ENCODE measurements at regions of chr14 and their contacts with region 1.

Region 1: DNA sequence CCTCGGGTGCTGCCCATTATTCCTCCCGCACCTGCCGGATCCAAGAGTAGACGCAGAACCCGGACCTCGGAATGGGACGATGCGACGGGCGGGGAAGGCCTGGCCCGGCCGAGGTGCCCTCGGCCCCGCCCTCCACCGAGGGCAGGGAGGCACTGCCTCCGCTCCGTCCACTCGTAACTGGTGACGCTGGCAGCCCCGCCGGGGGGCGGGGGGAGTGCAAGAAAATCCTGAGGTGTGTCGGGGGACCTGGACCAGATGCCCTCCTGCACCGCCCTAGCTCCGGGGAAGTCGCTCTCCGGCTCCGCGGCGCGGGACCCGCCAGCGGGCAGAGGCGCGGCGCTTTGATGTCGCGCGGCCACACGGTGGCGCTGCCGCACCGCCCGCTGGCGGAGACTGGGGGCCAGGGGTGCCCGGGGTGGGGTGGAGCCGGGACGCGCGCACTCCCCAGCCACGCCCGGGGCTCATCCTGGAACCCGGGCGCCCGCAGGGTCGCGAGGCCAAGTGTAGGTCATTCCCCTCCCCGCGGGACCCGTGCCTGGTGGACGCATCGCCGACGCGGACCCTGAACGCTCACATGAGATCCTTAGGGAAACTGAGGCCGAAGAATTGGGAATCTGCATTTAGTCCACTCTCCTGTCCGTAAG is 202.8 kb downstream of the TTC8 start:
- DNase-seq: peak; percentile 22 to 82 (median 40)
- ATAC-seq: peak; percentile 41 to 90 (median 82)
- H3K4me3 ChIP-seq: peak overlapping the region; percentile 25 to 65 (median 54)
- H3K27ac ChIP-seq: no peak overlapping the region
- H3K4me1 ChIP-seq: peaks cover 0 to 27% (median 9%) of the 10 kb centered on the region in 12 donors
- H3K27me3 ChIP-seq: peaks cover 0 to 67% (median 27%) of the 10 kb centered on the region in 9 donors
- CTCF ChIP-seq: peak; percentile 55 to 93 (median 82)
- POLR2A ChIP-seq: no peak

Region 2: GRCh38 chr14:89899917-89900663 is 872.9 kb after region 1 on chr14:
- intact Hi-C with region 1: loop called in 1 of 10 experiments (anchors 5 kb)
- DNase-seq: no peak
- ATAC-seq: peak in 2 of 4 donors; percentile 39 to 67
- H3K4me3 ChIP-seq: no peak overlapping the region
- H3K27ac ChIP-seq: no peak overlapping the region
- H3K4me1 ChIP-seq: peaks cover 0 to 10% (median 0%) of the 10 kb centered on the region in 12 donors
- H3K27me3 ChIP-seq: no peaks in the 10 kb centered on the region
- CTCF ChIP-seq: peak; percentile 33 to 68 (median 53)
- POLR2A ChIP-seq: no peak

Measured in heart left ventricle (tissue), 16 donors.